ENCODE measurements at regions of chr19 and their contacts with region 1.

Region 1: GRCh38 chr19:12139885-12140547 is at the start of gene ZNF20:
- DNase-seq: peak; percentile 67
- ATAC-seq: peak; percentile 99
- H3K4me3 ChIP-seq: peak within 1 kb of the TSS; percentile 96
- H3K27ac ChIP-seq: peak within 1 kb of the TSS; percentile 85
- H3K4me1 ChIP-seq: peaks cover 3% of the 10 kb centered on the region
- H3K27me3 ChIP-seq: no peaks in the 10 kb centered on the region
- CTCF ChIP-seq: no peak
- EP300 ChIP-seq: no peak
- POLR2A ChIP-seq: peak; percentile 54; the same call in 1 of the 2 replicates
- RAD21 ChIP-seq: no peak
- polyA plus RNA-seq, gene ZNF20: 2.5 to 2.8 TPM

Region 2: GRCh38 chr19:10502524-10503001 is 1637.5 kb before region 1 on chr19:
- CTCF ChIA-PET with region 1: no interaction called
- POLR2A ChIA-PET with region 1: no interaction called
- RAD21 ChIA-PET with region 1: no interaction called
- SMC1A ChIA-PET with region 1: no interaction called
- in situ Hi-C with region 1: no loop called
- intact Hi-C with region 1: no loop called
- DNase-seq: peak; percentile 61
- ATAC-seq: peak; percentile 90
- H3K4me3 ChIP-seq: peak overlapping the region; percentile 77
- H3K27ac ChIP-seq: peak overlapping the region; percentile 99
- H3K4me1 ChIP-seq: peaks cover 25% of the 10 kb centered on the region
- H3K27me3 ChIP-seq: no peaks in the 10 kb centered on the region
- CTCF ChIP-seq: no peak
- EP300 ChIP-seq: peak in 1 of 2 experiments; percentile 39; a peak in 1 of 4 replicates
- POLR2A ChIP-seq: peak; percentile 95
- RAD21 ChIP-seq: no peak

Region 3: GRCh38 chr19:11659612-11660011 is 480.4 kb before region 1 on chr19:
- CTCF ChIA-PET with region 1: interaction called, 10 read pairs
- POLR2A ChIA-PET with region 1: no interaction called
- RAD21 ChIA-PET with region 1: interaction called, 3 read pairs
- SMC1A ChIA-PET with region 1: interaction called, 5 read pairs
- in situ Hi-C with region 1: no loop called
- intact Hi-C with region 1: no loop called
- DNase-seq: no peak
- ATAC-seq: no peak
- H3K4me3 ChIP-seq: no peak overlapping the region
- H3K27ac ChIP-seq: no peak overlapping the region
- H3K4me1 ChIP-seq: no peaks in the 10 kb centered on the region
- H3K27me3 ChIP-seq: no peaks in the 10 kb centered on the region
- CTCF ChIP-seq: peak; percentile 25 to 56 (median 33); a peak in 5 of 6 replicates
- EP300 ChIP-seq: no peak
- POLR2A ChIP-seq: no peak
- RAD21 ChIP-seq: peak; percentile 64

Region 4: DNA sequence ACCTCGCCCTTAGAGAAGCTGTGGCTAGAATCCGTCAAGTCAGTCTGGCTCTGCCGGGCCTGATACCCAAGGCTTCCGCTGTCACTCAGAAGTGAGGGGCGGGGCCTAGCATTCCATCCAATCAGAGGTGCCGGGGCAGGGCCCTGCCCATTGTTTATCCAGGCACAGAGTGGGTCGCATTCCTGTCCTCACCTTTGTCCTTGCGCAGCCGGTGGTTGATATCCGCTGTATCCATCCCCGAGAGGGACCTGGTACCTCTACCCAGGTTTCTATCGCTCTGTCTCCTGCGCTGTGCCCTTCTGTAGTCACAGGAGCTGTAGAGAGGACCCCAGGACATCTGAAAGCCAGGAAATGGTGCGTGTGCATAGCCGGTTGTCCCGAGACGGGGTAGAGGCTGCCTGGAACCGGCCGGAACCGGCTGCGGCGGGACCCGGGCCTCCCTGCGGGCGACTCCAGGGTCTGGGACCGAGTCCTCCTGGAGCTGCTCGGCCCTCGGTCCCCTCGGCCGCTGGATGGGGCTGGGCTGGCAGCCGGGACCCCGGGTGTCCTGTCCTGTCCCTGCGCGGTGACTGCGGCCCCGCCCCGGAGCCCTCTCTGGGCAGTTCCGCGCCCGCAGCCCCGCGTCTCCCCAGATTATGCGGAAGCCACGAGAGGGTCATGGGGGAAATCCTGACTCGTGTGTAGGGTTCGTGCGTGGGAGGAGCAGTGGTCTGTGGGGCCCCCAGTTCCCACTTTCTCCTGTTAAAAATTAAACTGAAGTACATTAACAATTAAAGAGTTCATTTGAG is 175.0 kb before region 1 on chr19 and contains the start of gene ZNF763:
- CTCF ChIA-PET with region 1: interaction called, 33 read pairs
- POLR2A ChIA-PET with region 1: no interaction called
- RAD21 ChIA-PET with region 1: interaction called, 30 read pairs
- SMC1A ChIA-PET with region 1: interaction called, 24 read pairs
- in situ Hi-C with region 1: loop called (anchors 5 kb)
- intact Hi-C with region 1: loop called (anchors 1 kb)
- DNase-seq: peak; percentile 79
- ATAC-seq: peak; percentile 97
- H3K4me3 ChIP-seq: peak within 1 kb of the TSS; percentile 70
- H3K27ac ChIP-seq: peak within 1 kb of the TSS; percentile 94
- H3K4me1 ChIP-seq: peaks cover 7% of the 10 kb centered on the region
- H3K27me3 ChIP-seq: no peaks in the 10 kb centered on the region
- CTCF ChIP-seq: no peak
- EP300 ChIP-seq: peak; percentile 48 to 63; a peak in 2 of 4 replicates
- POLR2A ChIP-seq: peak; percentile 82
- RAD21 ChIP-seq: no peak
- polyA plus RNA-seq, gene ZNF763: 0.86 to 0.89 TPM

Region 5: GRCh38 chr19:12052497-12053169 is 87.4 kb before region 1 on chr19 and contains the start of gene ZNF878:
- CTCF ChIA-PET with region 1: interaction called, 10 read pairs
- POLR2A ChIA-PET with region 1: interaction called, 3 read pairs
- RAD21 ChIA-PET with region 1: interaction called, 7 read pairs
- SMC1A ChIA-PET with region 1: no interaction called
- in situ Hi-C with region 1: loop called (anchors 5 kb)
- intact Hi-C with region 1: no loop called
- DNase-seq: peak; percentile 67
- ATAC-seq: peak; percentile 96
- H3K4me3 ChIP-seq: peak within 1 kb of the TSS; percentile 86
- H3K27ac ChIP-seq: peak within 1 kb of the TSS; percentile 67
- H3K4me1 ChIP-seq: no peaks in the 10 kb centered on the region
- H3K27me3 ChIP-seq: no peaks in the 10 kb centered on the region
- CTCF ChIP-seq: peak; percentile 12 to 26 (median 18); a peak in 3 of 6 replicates
- EP300 ChIP-seq: no peak
- POLR2A ChIP-seq: peak; percentile 92
- RAD21 ChIP-seq: no peak
- polyA plus RNA-seq, gene ZNF878: 0.24 to 0.79 TPM

Region 6: DNA sequence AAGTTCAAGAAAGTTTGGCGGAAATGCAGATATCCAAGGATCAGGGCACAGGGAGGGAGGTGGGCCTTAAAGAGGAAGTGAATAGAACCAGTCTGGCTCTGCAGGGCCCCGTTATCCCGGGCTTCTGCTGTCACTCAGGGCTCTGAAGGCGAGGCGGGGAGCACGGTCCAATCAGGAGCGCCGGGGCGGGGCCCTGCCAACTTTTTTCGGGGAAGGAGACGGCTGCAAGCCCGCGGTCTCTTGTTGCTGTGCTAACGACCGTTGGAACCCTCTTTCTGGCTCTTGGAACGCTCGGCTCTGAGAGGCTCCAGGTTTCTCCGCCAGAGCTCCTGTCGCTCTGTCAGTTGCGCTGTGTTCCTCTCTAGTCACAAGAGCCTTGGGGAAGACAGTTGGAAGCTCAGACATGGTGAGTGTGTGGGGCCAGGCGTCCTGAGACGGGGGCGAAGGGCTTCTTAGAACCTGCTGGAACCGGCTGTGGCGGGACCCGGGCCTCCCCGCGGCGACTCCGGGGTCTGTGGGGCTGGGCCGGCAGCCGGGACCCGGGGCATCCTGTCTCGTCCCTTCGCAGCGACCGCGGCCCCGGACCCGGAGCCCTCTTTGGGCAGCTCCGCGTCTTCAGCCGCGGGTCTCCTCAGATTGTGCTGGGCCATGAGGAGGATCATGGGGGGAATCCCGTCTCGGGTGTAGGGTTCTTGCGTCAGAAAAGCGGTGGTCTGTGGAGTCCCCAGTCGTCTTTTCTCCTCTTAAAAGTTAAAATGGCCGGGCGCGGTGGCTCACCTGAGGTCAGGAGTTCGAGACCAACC is 47.8 kb before region 1 on chr19:
- CTCF ChIA-PET with region 1: interaction called, 33 read pairs
- POLR2A ChIA-PET with region 1: interaction called, 4 read pairs
- RAD21 ChIA-PET with region 1: interaction called, 18 read pairs
- SMC1A ChIA-PET with region 1: interaction called, 20 read pairs
- in situ Hi-C with region 1: no loop called
- intact Hi-C with region 1: loop called (anchors 2 kb)
- DNase-seq: peak; percentile 16
- ATAC-seq: peak; percentile 74
- H3K4me3 ChIP-seq: peak overlapping the region; percentile 52
- H3K27ac ChIP-seq: peak overlapping the region; percentile 68
- H3K4me1 ChIP-seq: no peaks in the 10 kb centered on the region
- H3K27me3 ChIP-seq: no peaks in the 10 kb centered on the region
- CTCF ChIP-seq: no peak
- EP300 ChIP-seq: no peak
- POLR2A ChIP-seq: peak; percentile 63
- RAD21 ChIP-seq: no peak

Region 7: DNA sequence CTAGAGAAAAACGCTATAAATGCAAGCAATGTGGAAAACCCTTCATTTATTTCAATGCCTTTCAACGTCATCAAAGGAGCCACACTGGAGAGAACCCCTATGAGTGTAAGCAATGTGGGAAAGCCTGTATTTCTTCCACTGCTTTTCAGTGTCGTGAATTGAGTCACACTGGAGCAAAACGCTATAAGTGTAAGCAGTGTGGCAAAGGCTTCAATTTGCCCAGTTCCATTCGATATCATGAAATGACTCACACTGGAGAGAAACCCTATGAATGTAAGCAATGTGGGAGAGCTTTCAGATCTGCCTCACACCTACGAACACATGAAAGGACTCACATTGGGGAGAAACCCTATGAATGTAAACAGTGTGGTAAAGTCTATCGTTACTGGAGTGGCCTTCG is 27.3 kb before region 1 on chr19:
- CTCF ChIA-PET with region 1: no interaction called
- POLR2A ChIA-PET with region 1: no interaction called
- RAD21 ChIA-PET with region 1: no interaction called
- SMC1A ChIA-PET with region 1: no interaction called
- in situ Hi-C with region 1: no loop called
- intact Hi-C with region 1: no loop called
- DNase-seq: no peak
- ATAC-seq: no peak
- H3K4me3 ChIP-seq: no peak overlapping the region
- H3K27ac ChIP-seq: no peak overlapping the region
- H3K4me1 ChIP-seq: no peaks in the 10 kb centered on the region
- H3K27me3 ChIP-seq: no peaks in the 10 kb centered on the region
- CTCF ChIP-seq: no peak
- EP300 ChIP-seq: no peak
- POLR2A ChIP-seq: no peak
- RAD21 ChIP-seq: no peak

Region 8: GRCh38 chr19:12716861-12717260 is 576.8 kb after region 1 on chr19:
- CTCF ChIA-PET with region 1: no interaction called
- POLR2A ChIA-PET with region 1: no interaction called
- RAD21 ChIA-PET with region 1: no interaction called
- SMC1A ChIA-PET with region 1: no interaction called
- in situ Hi-C with region 1: no loop called
- intact Hi-C with region 1: no loop called
- DNase-seq: no peak
- ATAC-seq: peak; percentile 78
- H3K4me3 ChIP-seq: no peak overlapping the region
- H3K27ac ChIP-seq: no peak overlapping the region
- H3K4me1 ChIP-seq: 0 out of 2 replicates have a peak, but pooled peaks cover 4% of the 10 kb centered on the region
- H3K27me3 ChIP-seq: no peaks in the 10 kb centered on the region
- CTCF ChIP-seq: peak; percentile 45 to 64 (median 48); a peak in 5 of 6 replicates
- EP300 ChIP-seq: no peak
- POLR2A ChIP-seq: no peak
- RAD21 ChIP-seq: peak; percentile 50; the same call in 1 of the 2 replicates